Activated CD4-positive, alpha-beta T cell treated with anti-CD3 and anti-CD28 coated beads, Interleukin-2, amount 10 ng/mL, durations not matched to agents 7 days and 5 days (primary cell): ENCODE measurements at regions of chr4 and their contacts with region 1.

Region 1: DNA sequence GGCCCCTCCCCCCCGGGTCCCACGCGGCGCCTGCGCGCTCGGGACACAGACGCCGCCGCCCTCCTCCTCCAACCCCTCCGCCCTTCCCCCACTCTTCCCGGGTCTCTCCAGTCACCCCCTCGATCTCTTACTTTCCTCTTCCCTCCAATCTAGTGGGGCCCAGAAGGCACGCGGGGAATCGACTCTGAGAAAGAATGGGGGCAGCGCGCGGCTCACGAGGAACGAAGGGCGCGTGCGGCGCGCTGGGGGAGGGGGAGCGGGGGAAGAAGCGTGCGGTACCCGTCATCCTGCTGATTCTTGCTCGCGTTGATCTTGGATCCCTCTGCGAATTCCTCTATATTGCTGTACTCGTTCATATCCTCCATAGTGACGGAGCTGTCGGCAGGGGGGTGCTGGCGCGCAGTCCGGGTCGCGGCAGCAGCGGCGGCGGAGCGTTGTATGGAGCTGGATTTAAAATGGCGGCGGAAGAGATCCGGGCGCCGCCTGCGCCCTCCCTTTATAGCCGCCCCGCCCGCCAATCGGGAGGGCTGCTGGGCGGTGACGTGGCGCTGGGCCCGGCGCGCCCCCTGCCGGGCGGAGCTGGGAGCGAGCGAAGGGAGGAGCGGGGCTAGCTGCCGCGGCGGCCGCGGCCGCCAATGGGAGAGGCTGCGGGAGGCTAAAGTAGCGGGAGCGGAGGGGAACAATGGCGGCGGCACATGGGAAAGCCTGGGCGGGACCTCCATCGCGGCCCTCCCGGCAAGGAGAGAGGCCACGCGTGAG is 1.1 kb downstream of the HNRNPDL start:
- DNase-seq: peak; percentile 90
- H3K4me3 Mint-ChIP-seq: peak overlapping the region; percentile 100
- H3K27ac Mint-ChIP-seq: peak overlapping the region; percentile 100
- H3K4me1 Mint-ChIP-seq: peaks cover 64% of the 10 kb centered on the region
- H3K27me3 Mint-ChIP-seq: no peaks in the 10 kb centered on the region

Region 2: DNA sequence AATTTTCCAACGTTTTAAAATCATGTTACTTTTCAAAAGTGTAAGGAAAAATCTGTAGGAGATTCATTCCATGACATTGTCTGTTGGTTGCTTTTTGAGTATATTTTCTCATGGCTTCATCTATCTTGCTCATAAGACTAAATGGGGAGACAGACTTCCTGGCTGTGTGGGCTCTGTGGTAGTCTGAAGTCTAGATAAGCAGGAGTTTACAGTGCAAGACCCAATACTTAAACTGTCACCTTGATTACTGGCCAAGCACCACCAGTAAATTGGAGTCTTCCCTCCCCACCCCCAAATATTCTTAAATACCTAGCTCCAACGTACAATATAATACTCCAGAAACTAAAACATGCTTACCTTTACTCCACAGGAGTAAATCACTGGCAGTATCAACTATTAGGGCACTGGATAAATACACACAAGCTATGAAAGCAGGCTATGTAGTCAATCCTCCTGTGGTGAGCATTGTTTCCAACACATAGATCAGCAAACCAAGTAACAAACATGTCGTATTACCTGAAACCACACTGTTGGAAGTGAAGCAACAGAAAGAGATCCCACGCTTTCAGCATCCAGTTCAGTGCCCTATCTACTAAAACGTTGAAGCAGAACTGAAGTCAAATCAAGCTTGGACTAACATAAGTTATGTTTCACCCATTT is 61.6 kb before region 1 on chr4:
- CTCF ChIA-PET with region 1: interaction called, 27 read pairs
- POLR2A ChIA-PET with region 1: interaction called, 3 read pairs
- DNase-seq: no peak
- H3K4me3 Mint-ChIP-seq: peak overlapping the region; percentile 20
- H3K27ac Mint-ChIP-seq: no peak overlapping the region
- H3K4me1 Mint-ChIP-seq: peaks cover 76% of the 10 kb centered on the region
- H3K27me3 Mint-ChIP-seq: no peaks in the 10 kb centered on the region

Region 3: GRCh38 chr4:82373816-82374625 is 55.1 kb before region 1 on chr4 and contains the start of gene HNRNPD:
- CTCF ChIA-PET with region 1: interaction called, 39 read pairs
- POLR2A ChIA-PET with region 1: interaction called, 14 read pairs
- DNase-seq: peak; percentile 96
- H3K4me3 Mint-ChIP-seq: peak within 1 kb of the TSS; percentile 97
- H3K27ac Mint-ChIP-seq: peak within 1 kb of the TSS; percentile 97
- H3K4me1 Mint-ChIP-seq: peaks cover 41% of the 10 kb centered on the region
- H3K27me3 Mint-ChIP-seq: no peaks in the 10 kb centered on the region
- total RNA-seq, gene HNRNPD: 368 to 430 TPM

Region 4: GRCh38 chr4:82379964-82380733 is 49.0 kb before region 1 on chr4:
- CTCF ChIA-PET with region 1: interaction called, 39 read pairs
- POLR2A ChIA-PET with region 1: interaction called, 4 read pairs
- DNase-seq: no peak
- H3K4me3 Mint-ChIP-seq: no peak overlapping the region
- H3K27ac Mint-ChIP-seq: no peak overlapping the region
- H3K4me1 Mint-ChIP-seq: peaks cover 28% of the 10 kb centered on the region
- H3K27me3 Mint-ChIP-seq: no peaks in the 10 kb centered on the region

Region 5: GRCh38 chr4:82450966-82451755 is 22.0 kb after region 1 on chr4:
- CTCF ChIA-PET with region 1: interaction called, 13 read pairs
- POLR2A ChIA-PET with region 1: interaction called, 3 read pairs
- DNase-seq: no peak
- H3K4me3 Mint-ChIP-seq: no peak overlapping the region
- H3K27ac Mint-ChIP-seq: no peak overlapping the region
- H3K4me1 Mint-ChIP-seq: no peaks in the 10 kb centered on the region
- H3K27me3 Mint-ChIP-seq: no peaks in the 10 kb centered on the region